Colonic mucosa (tissue), 4 donors: ENCODE measurements at regions of chr1 and their contacts with region 1.

Region 1: GRCh38 chr1:166988976-166989567 is at the start of gene MAEL:
- DNase-seq: no peak
- H3K4me3 ChIP-seq: no peak within 1 kb of the TSS
- H3K27ac ChIP-seq: no peak within 1 kb of the TSS
- H3K4me1 ChIP-seq: no peaks in the 10 kb centered on the region
- H3K27me3 ChIP-seq: no peaks in the 10 kb centered on the region
- CTCF ChIP-seq: no peak
- total RNA-seq, gene MAEL: not detected

Region 2: GRCh38 chr1:167043752-167044488 is 54.8 kb after region 1 on chr1:
- intact Hi-C with region 1: loop called (anchors 5 kb)
- DNase-seq: peak; percentile 85
- H3K4me3 ChIP-seq: peak overlapping the region; percentile 15
- H3K27ac ChIP-seq: peak overlapping the region; percentile 30
- H3K4me1 ChIP-seq: no peaks in the 10 kb centered on the region
- H3K27me3 ChIP-seq: no peaks in the 10 kb centered on the region
- CTCF ChIP-seq: no peak